Colonic mucosa (tissue), 4 donors: ENCODE measurements at regions of chr2 and their contacts with region 1.

Region 1: GRCh38 chr2:237512774-237513466 is 25.9 kb downstream of the MLPH start:
- DNase-seq: peak; percentile 88
- H3K4me3 ChIP-seq: no peak overlapping the region
- H3K27ac ChIP-seq: no peak overlapping the region
- H3K4me1 ChIP-seq: peaks cover 5% of the 10 kb centered on the region
- H3K27me3 ChIP-seq: no peaks in the 10 kb centered on the region
- CTCF ChIP-seq: peak; percentile 78

Region 2: DNA sequence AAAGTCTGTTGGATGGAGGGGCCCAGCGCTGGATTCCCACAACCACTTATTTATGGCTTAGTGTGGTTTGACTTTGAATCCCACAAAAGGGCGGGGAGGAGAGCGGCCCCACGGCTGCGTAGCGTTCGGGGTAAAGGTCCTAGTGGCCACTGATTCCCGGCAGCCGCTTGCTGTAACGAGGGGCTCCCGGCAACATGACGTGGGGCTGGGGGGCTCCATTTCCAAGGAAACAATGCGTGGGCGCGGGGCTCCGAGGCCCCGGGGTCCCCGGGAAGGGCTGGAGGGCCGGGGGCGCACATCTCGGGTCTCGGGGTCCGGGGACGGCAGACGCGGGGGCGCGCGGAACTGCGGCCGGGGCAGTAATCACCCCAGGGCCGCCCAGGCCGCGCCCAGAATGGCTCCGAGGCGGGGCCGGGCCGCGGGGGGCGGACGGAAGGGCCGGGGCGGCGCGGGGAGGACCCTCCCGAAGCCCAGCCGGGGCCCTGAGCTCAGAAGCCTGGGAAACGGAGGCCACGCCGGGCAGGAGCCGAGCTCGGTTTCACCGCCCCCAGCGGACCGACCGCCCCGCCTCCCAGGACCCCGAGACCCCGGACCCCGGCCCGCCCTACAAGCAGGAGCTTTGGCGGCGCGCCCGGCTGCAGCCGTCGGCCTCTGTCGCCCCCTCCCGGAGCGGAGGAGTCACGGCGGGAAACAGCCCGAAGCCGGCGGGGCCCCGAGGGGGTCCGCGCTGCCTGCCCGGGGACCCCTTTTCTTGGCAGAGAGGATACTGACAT is 37.8 kb before region 1 on chr2:
- intact Hi-C with region 1: loop called (anchors 5 kb)
- DNase-seq: peak; percentile 80
- H3K4me3 ChIP-seq: peak overlapping the region; percentile 60
- H3K27ac ChIP-seq: peak overlapping the region; percentile 81
- H3K4me1 ChIP-seq: no peaks in the 10 kb centered on the region
- H3K27me3 ChIP-seq: no peaks in the 10 kb centered on the region
- CTCF ChIP-seq: peak; percentile 87

Region 3: GRCh38 chr2:237616734-237617586 is 104.0 kb after region 1 on chr2:
- intact Hi-C with region 1: no loop called
- DNase-seq: no peak
- H3K4me3 ChIP-seq: no peak overlapping the region
- H3K27ac ChIP-seq: peak overlapping the region; percentile 22
- H3K4me1 ChIP-seq: no peaks in the 10 kb centered on the region
- H3K27me3 ChIP-seq: no peaks in the 10 kb centered on the region
- CTCF ChIP-seq: no peak

Region 4: DNA sequence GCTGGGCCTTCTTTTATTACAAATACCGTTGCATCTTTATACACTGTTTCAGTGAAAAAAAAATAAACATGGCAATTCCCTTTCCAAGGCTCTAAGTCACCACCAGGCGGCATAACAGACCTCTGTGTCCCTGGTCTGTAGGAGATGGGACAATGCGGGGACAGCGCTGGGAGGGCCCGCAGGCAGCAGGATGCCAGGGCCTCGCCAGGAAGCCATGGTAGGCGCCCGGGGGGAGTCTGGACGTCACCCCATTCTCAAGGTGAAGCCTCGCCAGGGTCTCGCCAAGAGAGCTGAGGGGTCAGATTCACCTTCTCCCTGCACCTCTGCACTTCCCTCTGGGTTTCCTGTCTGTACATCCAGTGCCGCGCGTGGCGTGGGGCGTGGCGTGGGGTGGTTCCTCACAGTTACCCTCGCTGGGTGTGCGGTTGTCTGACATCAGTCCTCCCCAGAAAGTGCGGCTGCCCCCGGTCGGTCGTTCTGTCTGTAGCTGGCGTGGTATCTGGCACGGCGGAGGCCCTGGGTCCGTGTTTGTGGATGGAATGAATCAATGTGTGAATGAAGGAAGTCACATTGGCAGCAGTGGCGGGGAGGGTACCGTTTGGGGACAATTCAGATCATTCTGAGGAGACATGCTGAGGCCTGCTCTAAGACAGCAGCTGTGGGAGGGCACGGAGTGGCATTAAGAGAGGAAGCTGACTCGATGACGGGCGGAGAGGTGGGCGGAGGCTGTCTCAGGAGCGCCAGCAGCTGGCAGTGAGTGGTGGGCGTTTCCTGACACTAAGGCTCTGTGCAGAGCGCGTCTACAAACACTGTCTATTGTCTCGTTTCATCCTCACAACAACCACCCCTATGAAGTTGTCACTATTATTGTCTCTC is 160.4 kb after region 1 on chr2:
- intact Hi-C with region 1: loop called (anchors 5 kb)
- DNase-seq: peak; percentile 78
- H3K4me3 ChIP-seq: peak overlapping the region; percentile 31
- H3K27ac ChIP-seq: peak overlapping the region; percentile 8
- H3K4me1 ChIP-seq: peaks cover 4% of the 10 kb centered on the region
- H3K27me3 ChIP-seq: no peaks in the 10 kb centered on the region
- CTCF ChIP-seq: peak; percentile 70

Region 5: GRCh38 chr2:237744613-237745249 is 231.8 kb after region 1 on chr2:
- intact Hi-C with region 1: loop called (anchors 10 kb)
- DNase-seq: peak; percentile 80
- H3K4me3 ChIP-seq: no peak overlapping the region
- H3K27ac ChIP-seq: no peak overlapping the region
- H3K4me1 ChIP-seq: peaks cover 12% of the 10 kb centered on the region
- H3K27me3 ChIP-seq: no peaks in the 10 kb centered on the region
- CTCF ChIP-seq: peak; percentile 98